ENCODE measurements at regions of chr1 and their contacts with region 1.

Region 1: DNA sequence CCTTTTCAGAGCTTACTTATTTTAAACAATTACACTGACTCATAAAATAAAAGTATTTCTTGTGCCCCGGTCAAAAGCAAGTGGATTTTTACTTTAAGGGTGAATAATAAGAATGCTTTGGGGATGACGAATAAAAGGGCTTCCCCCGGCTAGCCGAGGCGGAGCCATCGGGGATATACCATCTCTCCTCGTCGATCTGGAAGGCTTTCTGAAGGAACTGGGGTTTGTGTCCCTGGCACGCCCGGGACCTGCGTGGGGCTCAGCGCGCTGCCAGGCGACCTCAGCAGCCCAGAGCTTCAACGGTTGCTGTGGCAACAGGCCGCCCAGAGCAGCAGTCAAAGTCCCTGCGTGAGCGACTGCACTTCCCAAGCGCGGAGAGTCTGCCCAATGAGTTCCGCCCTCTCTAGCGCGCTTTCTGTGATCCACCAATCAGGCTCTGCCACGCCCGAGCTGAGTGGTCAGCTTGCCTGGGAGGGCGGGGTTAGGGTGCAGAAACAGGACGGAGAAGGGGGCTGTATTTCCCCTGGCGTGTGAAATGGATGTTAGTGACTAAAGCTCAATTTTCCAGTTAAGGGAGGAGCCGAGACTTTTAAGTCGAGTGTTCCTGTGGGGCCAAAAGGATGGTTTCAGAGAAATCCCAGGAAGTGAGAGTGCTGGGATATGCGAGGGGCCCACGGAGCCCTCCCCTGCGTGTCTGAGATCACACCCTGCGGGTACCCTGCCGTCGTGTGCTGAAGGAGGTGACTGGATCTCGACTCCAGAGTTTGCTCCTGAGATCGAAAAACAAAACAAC is 33.0 kb upstream of the MGST3 start:
- DNase-seq: peak; percentile 95 to 99
- H3K4me3 ChIP-seq: peak overlapping the region; percentile 46 to 71
- H3K27ac ChIP-seq: peak overlapping the region; percentile 76 to 80
- H3K4me1 ChIP-seq: peaks cover 0 to 6% of the 10 kb centered on the region in 2 donors
- H3K27me3 ChIP-seq: no peaks in the 10 kb centered on the region
- CTCF ChIP-seq: no peak

Region 2: DNA sequence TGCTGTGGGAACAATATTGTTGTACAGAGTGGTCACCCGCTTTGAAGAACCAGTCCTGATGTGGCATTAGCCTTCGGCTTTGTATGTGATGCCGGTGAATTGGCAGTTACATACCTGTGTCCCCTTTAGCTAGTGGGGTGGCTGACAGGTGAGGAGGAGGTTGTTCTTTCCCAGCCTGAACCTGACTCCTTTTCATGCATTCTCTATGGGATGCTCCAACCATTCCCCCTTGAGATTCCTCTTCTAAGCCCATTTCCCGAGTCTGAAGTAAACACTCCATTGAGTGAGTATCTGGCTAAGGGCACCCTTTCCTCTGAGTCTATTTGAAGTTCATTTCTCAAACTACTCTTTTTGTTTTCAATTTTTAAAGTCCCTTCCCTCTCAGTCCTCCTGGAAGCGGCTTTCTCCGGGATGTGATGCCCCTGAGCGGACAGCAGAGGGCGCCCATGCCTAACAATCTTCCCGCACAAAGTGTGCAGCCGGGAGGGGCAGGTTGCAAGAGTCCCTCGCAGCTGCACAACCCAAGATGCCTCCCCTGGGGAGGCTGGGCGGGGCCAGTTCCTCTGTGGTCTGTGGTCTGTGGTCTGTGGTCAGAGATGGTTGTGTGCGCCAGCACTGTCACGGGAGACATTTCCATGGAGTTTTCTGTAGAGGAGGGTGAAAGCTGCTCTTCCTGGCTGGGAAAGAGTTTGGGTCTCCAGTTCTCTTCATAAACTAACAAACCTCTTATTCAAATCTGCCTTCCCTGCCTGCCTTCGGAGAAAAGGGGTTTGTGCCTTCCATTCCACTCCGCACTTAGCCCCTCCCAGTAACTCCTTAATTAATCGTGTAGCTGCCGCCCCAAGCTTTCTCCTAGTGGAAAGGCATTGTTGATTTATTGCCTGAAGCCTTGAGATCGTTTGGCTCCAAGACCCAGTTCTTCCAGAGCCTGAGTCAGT is 205.2 kb before region 1 on chr1:
- intact Hi-C with region 1: loop called (anchors 1 kb)
- DNase-seq: peak; percentile 70 to 92
- H3K4me3 ChIP-seq: peak overlapping the region in 1 of 2 donors; percentile 40
- H3K27ac ChIP-seq: no peak overlapping the region
- H3K4me1 ChIP-seq: no peaks in the 10 kb centered on the region
- H3K27me3 ChIP-seq: no peaks in the 10 kb centered on the region
- CTCF ChIP-seq: peak; percentile 80 to 96 (median 93)

Region 3: GRCh38 chr1:165697881-165698760 is 100.0 kb after region 1 on chr1 and contains the start of gene ALDH9A1:
- intact Hi-C with region 1: loop called (anchors 2 kb)
- DNase-seq: peak; percentile 63 to 95
- H3K4me3 ChIP-seq: peak within 1 kb of the TSS; percentile 85 to 86
- H3K27ac ChIP-seq: peak within 1 kb of the TSS; percentile 95 to 97
- H3K4me1 ChIP-seq: peaks cover 4 to 12% of the 10 kb centered on the region in 2 donors
- H3K27me3 ChIP-seq: no peaks in the 10 kb centered on the region
- CTCF ChIP-seq: peak; percentile 8 to 37 (median 17)
- total RNA-seq, gene ALDH9A1: 58.0 TPM

Region 4: GRCh38 chr1:165827268-165828102 is 229.4 kb after region 1 on chr1 and contains the start of gene UCK2:
- intact Hi-C with region 1: loop called (anchors 2 kb)
- DNase-seq: peak; percentile 23 to 90
- H3K4me3 ChIP-seq: peak within 1 kb of the TSS; percentile 90 to 96
- H3K27ac ChIP-seq: peak within 1 kb of the TSS; percentile 96 to 97
- H3K4me1 ChIP-seq: peaks cover 0 to 9% of the 10 kb centered on the region in 2 donors
- H3K27me3 ChIP-seq: no peaks in the 10 kb centered on the region
- CTCF ChIP-seq: no peak
- total RNA-seq, gene UCK2: 30.3 TPM

Region 5: DNA sequence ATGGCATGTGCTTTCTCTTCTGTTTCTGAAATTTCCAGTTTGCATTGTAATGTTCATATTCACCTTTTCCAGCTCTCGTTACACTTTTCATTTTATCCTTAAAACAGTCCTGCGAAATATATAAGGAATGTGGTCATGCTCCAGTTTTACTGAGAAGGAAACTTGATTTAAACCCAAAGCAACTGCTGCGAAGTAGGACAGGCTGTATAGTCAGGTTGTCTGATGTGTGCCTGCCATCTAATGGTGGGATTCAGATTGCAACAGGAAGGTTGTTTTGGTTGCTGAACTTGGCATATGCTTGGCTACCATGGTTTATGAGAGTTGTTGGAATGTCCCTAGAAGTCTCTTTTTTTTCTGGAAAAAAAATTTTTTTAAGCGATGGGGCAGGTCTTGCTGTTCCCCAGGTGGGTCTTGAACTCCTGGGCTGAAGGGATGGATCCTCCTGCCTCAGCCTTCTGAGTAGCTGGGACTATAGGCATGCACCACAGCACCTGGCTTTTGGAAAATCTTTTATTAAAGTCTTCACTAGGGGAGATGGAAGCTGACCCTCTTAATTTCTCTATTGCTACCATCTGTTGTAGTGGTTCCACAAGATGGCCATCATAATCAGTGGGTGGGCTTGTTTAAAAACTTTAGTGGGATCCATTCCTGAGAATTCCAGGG is 316.2 kb after region 1 on chr1:
- intact Hi-C with region 1: loop called (anchors 1 kb)
- DNase-seq: peak in 1 of 2 donors; percentile 84
- H3K4me3 ChIP-seq: no peak overlapping the region
- H3K27ac ChIP-seq: peak overlapping the region in 1 of 2 donors; percentile 32
- H3K4me1 ChIP-seq: peaks cover 0 to 3% of the 10 kb centered on the region in 2 donors
- H3K27me3 ChIP-seq: no peaks in the 10 kb centered on the region
- CTCF ChIP-seq: peak; percentile 86 to 91 (median 87)